ENCODE measurements at regions of chr20 and their contacts with region 1.

Region 1: DNA sequence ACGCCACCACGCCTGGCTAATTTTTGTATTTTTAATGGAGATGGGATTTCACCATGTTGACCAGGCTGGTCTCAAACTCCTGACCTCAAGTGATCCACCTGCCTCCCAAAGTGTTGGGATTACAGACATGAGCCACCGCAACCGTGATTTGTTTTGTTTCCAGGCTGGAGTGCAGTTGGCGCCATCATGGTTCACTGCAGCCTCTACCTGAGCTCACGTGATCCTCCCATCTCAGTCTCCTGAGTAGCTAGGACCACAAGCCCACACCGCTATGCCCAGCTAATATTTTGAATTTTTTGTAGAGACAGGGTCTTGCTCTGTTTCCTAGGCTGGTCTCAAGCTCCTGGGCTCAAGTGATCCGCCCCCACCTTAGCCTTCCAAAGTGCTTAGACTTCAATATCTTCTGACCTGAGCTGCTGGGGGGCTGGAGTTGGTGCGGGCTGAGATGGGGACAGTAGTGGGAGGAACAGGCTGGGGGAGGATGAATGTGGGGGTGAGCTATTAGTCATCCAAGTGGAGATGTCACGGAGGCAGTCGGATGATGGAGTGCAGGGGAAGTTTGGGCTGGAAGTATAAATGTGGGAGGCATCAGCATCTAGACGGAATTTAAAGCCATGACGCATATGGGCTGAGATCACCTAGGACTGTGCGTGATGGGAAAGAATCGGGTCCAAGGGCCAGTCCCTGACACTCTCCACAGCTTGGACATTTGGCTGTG is 23.1 kb upstream of the ZMYND8 start:
- DNase-seq: peak; percentile 63
- H3K4me3 Mint-ChIP-seq: no peak overlapping the region
- H3K27ac Mint-ChIP-seq: no peak overlapping the region
- H3K4me1 Mint-ChIP-seq: peaks cover 14% of the 10 kb centered on the region
- H3K27me3 Mint-ChIP-seq: no peaks in the 10 kb centered on the region
- CTCF ChIP-seq: no peak

Region 2: GRCh38 chr20:46767127-46767761 is 612.3 kb before region 1 on chr20:
- CTCF ChIA-PET with region 1: interaction called, 24 read pairs
- POLR2A ChIA-PET with region 1: no interaction called
- intact Hi-C with region 1: no loop called
- DNase-seq: peak; percentile 72
- H3K4me3 Mint-ChIP-seq: no peak overlapping the region
- H3K27ac Mint-ChIP-seq: no peak overlapping the region
- H3K4me1 Mint-ChIP-seq: peaks cover 6% of the 10 kb centered on the region
- H3K27me3 Mint-ChIP-seq: no peaks in the 10 kb centered on the region
- CTCF ChIP-seq: peak; percentile 68

Region 3: GRCh38 chr20:47241345-47241781 is 138.2 kb before region 1 on chr20:
- CTCF ChIA-PET with region 1: interaction called, 21 read pairs
- POLR2A ChIA-PET with region 1: interaction called, 5 read pairs
- intact Hi-C with region 1: no loop called
- DNase-seq: no peak
- H3K4me3 Mint-ChIP-seq: no peak overlapping the region
- H3K27ac Mint-ChIP-seq: peak overlapping the region; percentile 27
- H3K4me1 Mint-ChIP-seq: peaks cover 5% of the 10 kb centered on the region
- H3K27me3 Mint-ChIP-seq: no peaks in the 10 kb centered on the region
- CTCF ChIP-seq: no peak

Region 4: GRCh38 chr20:47290008-47290407 is 89.6 kb before region 1 on chr20:
- CTCF ChIA-PET with region 1: interaction called, 34 read pairs
- POLR2A ChIA-PET with region 1: interaction called, 4 read pairs
- intact Hi-C with region 1: no loop called
- DNase-seq: no peak
- H3K4me3 Mint-ChIP-seq: no peak overlapping the region
- H3K27ac Mint-ChIP-seq: no peak overlapping the region
- H3K4me1 Mint-ChIP-seq: no peaks in the 10 kb centered on the region
- H3K27me3 Mint-ChIP-seq: no peaks in the 10 kb centered on the region
- CTCF ChIP-seq: no peak

Region 5: DNA sequence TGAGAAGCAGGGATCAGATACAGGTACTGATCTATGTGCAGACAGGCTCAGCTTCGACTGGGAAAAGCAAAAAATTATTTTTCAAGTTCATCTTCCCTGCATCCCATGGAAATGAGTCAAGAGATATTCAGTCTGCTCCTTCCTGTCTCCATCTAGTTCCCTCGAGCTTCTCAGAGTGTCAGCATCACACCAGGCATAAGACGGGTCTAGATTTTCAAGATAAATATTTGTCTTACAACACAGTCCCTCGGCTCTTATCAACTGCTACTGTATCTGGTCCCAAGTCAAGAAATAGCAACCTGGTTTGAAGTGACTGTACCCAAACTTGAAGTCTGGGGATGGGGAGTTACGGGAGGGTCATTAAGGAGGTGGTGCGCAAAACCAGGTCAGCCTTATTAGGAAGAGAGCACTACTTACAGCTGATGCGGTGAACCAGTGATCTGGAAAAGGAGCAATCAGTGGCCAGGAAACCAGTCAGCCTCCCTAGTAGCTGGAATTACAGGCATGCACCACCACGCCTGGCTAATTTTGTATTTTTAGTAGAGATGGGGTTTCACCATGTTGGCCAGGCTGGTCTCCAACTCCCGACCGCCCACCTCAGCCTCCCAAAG is 52.8 kb before region 1 on chr20:
- CTCF ChIA-PET with region 1: interaction called, 15 read pairs
- POLR2A ChIA-PET with region 1: interaction called, 8 read pairs
- intact Hi-C with region 1: no loop called
- DNase-seq: no peak
- H3K4me3 Mint-ChIP-seq: no peak overlapping the region
- H3K27ac Mint-ChIP-seq: peak overlapping the region; percentile 69
- H3K4me1 Mint-ChIP-seq: peaks cover 34% of the 10 kb centered on the region
- H3K27me3 Mint-ChIP-seq: no peaks in the 10 kb centered on the region
- CTCF ChIP-seq: no peak

Region 6: DNA sequence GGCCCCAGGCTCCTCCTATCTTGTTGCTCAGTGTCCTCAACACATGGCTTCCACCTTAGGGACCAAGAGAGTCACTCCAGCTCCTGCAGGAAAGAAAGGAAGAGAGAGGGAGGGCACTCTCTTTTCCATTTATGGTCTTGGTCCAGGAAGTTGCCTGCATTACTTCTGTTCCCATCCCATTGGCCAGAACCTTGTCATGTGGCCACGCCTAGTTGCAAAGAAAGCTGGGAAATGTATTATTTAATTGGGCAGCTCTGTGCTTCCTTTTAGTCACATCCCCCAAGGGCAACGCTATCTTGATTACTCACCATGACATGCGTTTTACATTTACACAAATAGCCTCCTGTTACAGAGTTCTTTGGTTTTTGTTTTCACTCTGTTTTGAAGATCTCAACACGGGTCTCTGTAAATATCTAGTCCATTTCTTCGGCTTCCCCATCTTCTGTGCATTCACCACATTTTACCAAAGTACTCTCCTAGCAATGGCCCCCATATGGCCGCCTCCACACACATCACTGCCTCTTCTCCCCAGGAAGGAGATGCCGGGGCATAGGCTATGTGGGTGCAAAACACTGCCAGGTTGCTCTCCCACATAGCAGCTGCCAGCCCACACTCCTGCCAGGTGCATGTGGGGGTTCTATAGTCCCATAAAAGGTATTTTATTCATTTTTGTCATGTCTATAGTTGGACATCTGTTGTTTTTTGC is 12.6 kb after region 1 on chr20:
- CTCF ChIA-PET with region 1: interaction called, 16 read pairs
- POLR2A ChIA-PET with region 1: interaction called, 12 read pairs
- intact Hi-C with region 1: no loop called
- DNase-seq: peak; percentile 97
- H3K4me3 Mint-ChIP-seq: peak overlapping the region; percentile 67
- H3K27ac Mint-ChIP-seq: peak overlapping the region; percentile 98
- H3K4me1 Mint-ChIP-seq: peaks cover 22% of the 10 kb centered on the region
- H3K27me3 Mint-ChIP-seq: no peaks in the 10 kb centered on the region
- CTCF ChIP-seq: no peak

Region 7: GRCh38 chr20:47464380-47465101 is 84.9 kb after region 1 on chr20:
- CTCF ChIA-PET with region 1: interaction called, 23 read pairs
- POLR2A ChIA-PET with region 1: interaction called, 11 read pairs
- intact Hi-C with region 1: loop called (anchors 1 kb)
- DNase-seq: peak; percentile 99
- H3K4me3 Mint-ChIP-seq: peak overlapping the region; percentile 51
- H3K27ac Mint-ChIP-seq: peak overlapping the region; percentile 72
- H3K4me1 Mint-ChIP-seq: peaks cover 38% of the 10 kb centered on the region
- H3K27me3 Mint-ChIP-seq: no peaks in the 10 kb centered on the region
- CTCF ChIP-seq: no peak